Activated B cell treated with CpG ODN at 0.5 μM for 24 hours (primary cell): ENCODE measurements at regions of chr1 and their contacts with region 1.

Region 1: GRCh38 chr1:23496490-23497181 is 12.7 kb upstream of the ASAP3 start:
- DNase-seq: no peak
- ATAC-seq: no peak
- H3K4me3 Mint-ChIP-seq: no peak overlapping the region
- H3K27ac Mint-ChIP-seq: no peak overlapping the region
- H3K4me1 Mint-ChIP-seq: peaks cover 15% of the 10 kb centered on the region
- H3K27me3 Mint-ChIP-seq: peaks cover 7% of the 10 kb centered on the region
- CTCF ChIP-seq: no peak

Region 2: DNA sequence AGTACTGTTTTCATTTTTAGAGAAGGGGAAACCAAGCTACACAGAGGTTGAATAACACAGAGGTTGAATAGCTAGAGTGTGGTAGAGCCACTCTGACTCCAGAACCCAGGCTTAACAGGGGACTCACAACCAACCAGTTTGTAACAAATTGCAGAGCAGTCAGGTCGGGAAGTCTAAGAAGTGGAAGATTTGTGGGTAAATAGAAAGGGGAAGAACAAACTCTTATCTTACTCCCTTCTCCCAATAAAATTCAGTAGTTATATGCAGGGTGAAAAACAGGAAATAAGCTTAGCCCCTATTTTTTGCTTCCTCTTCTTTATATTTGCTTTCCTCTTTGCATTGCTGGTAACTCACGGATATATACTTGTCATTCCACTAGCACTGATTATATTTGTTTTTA is 1420.9 kb before region 1 on chr1:
- CTCF ChIA-PET with region 1: no interaction called
- POLR2A ChIA-PET with region 1: no interaction called
- intact Hi-C with region 1: no loop called
- DNase-seq: no peak
- ATAC-seq: peak; percentile 43
- H3K4me3 Mint-ChIP-seq: peak overlapping the region; percentile 50
- H3K27ac Mint-ChIP-seq: peak overlapping the region; percentile 57
- H3K4me1 Mint-ChIP-seq: peaks cover 85% of the 10 kb centered on the region
- H3K27me3 Mint-ChIP-seq: no peaks in the 10 kb centered on the region
- CTCF ChIP-seq: no peak

Region 3: GRCh38 chr1:23249787-23250454 is 246.7 kb before region 1 on chr1:
- CTCF ChIA-PET with region 1: no interaction called
- POLR2A ChIA-PET with region 1: no interaction called
- intact Hi-C with region 1: no loop called
- DNase-seq: no peak
- ATAC-seq: no peak
- H3K4me3 Mint-ChIP-seq: no peak overlapping the region
- H3K27ac Mint-ChIP-seq: no peak overlapping the region
- H3K4me1 Mint-ChIP-seq: no peaks in the 10 kb centered on the region
- H3K27me3 Mint-ChIP-seq: peaks cover 5% of the 10 kb centered on the region
- CTCF ChIP-seq: no peak

Region 4: GRCh38 chr1:23484253-23485001 is 12.2 kb before region 1 on chr1:
- CTCF ChIA-PET with region 1: interaction called, 25 read pairs
- POLR2A ChIA-PET with region 1: interaction called, 6 read pairs
- intact Hi-C with region 1: no loop called
- DNase-seq: peak; percentile 81
- ATAC-seq: peak; percentile 88
- H3K4me3 Mint-ChIP-seq: peak overlapping the region; percentile 91
- H3K27ac Mint-ChIP-seq: peak overlapping the region; percentile 75
- H3K4me1 Mint-ChIP-seq: peaks cover 33% of the 10 kb centered on the region
- H3K27me3 Mint-ChIP-seq: peaks cover 4% of the 10 kb centered on the region
- CTCF ChIP-seq: no peak

Region 5: GRCh38 chr1:23514111-23514679 is 17.6 kb after region 1 on chr1:
- CTCF ChIA-PET with region 1: interaction called, 74 read pairs
- POLR2A ChIA-PET with region 1: interaction called, 3 read pairs
- intact Hi-C with region 1: no loop called
- DNase-seq: no peak
- ATAC-seq: no peak
- H3K4me3 Mint-ChIP-seq: no peak overlapping the region
- H3K27ac Mint-ChIP-seq: no peak overlapping the region
- H3K4me1 Mint-ChIP-seq: peaks cover 2% of the 10 kb centered on the region
- H3K27me3 Mint-ChIP-seq: no peaks in the 10 kb centered on the region
- CTCF ChIP-seq: no peak

Region 6: DNA sequence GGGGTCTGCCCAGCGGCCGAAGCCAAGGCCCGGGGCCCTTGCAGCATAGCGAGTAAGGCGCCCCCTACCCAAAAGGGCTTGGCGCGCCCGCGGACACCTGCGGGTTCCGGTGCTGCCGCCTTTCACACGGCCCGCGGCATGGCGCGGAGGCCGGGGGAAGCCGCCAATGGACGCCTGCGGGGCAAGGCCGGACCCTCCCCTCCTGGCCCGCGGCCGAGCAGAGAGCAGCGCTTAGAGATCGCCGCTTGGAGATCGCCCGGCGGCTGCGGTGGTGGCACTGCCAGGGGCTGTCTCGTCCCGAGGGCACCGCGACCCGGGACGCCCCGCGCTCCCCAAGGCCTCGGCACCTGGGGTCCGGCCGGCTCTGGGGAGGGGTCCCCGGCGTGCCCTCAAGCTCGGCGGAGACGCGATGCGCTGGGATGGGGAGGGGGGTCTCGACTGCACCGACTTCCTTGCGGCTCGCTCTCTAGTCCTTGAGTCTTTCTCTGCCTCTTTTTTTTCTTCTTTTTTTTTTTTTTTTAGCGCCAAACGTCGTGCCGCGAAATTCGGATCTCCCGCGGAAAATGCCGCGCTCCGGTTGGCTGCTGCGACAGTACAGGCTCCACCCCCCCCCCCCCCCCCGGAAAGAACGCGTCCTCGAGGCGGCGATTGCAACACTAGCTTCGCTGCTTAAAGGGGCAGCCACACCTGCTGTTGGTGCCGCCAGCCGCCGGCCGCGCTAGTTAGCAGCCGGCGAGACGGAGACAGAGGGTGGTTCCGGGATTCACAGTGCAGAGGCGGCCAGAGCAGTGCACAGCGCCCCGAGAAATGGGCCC is 34.3 kb after region 1 on chr1 and contains the start of gene E2F2:
- CTCF ChIA-PET with region 1: interaction called, 94 read pairs
- POLR2A ChIA-PET with region 1: interaction called, 33 read pairs
- intact Hi-C with region 1: no loop called
- DNase-seq: peak; percentile 68
- ATAC-seq: peak; percentile 73
- H3K4me3 Mint-ChIP-seq: peak within 1 kb of the TSS; percentile 87
- H3K27ac Mint-ChIP-seq: peak within 1 kb of the TSS; percentile 70
- H3K4me1 Mint-ChIP-seq: peaks cover 86% of the 10 kb centered on the region
- H3K27me3 Mint-ChIP-seq: no peaks in the 10 kb centered on the region
- CTCF ChIP-seq: no peak
- total RNA-seq, gene E2F2: 2.4 and 3.4 TPM in 2 replicates

Region 7: GRCh38 chr1:23664837-23665795 is 168.5 kb after region 1 on chr1:
- CTCF ChIA-PET with region 1: interaction called, 5 read pairs
- POLR2A ChIA-PET with region 1: interaction called, 3 read pairs
- intact Hi-C with region 1: loop called (anchors 1 kb)
- DNase-seq: no peak
- ATAC-seq: no peak
- H3K4me3 Mint-ChIP-seq: no peak overlapping the region
- H3K27ac Mint-ChIP-seq: no peak overlapping the region
- H3K4me1 Mint-ChIP-seq: peaks cover 4% of the 10 kb centered on the region
- H3K27me3 Mint-ChIP-seq: peaks cover 3% of the 10 kb centered on the region
- CTCF ChIP-seq: no peak